IMR-90 (cell line): ENCODE measurements at regions of chr14 and their contacts with region 1.

Region 1: GRCh38 chr14:73503648-73504047 is 12.9 kb downstream of the RIOX1 start:
- DNase-seq: peak; percentile 76
- ATAC-seq: peak; percentile 72
- H3K4me3 ChIP-seq: no peak overlapping the region
- H3K27ac ChIP-seq: no peak overlapping the region
- H3K4me1 ChIP-seq: no peaks in the 10 kb centered on the region
- H3K27me3 ChIP-seq: no peaks in the 10 kb centered on the region
- CTCF ChIP-seq: no peak
- POLR2A ChIP-seq: no peak
- RAD21 ChIP-seq: no peak

Region 2: GRCh38 chr14:73162251-73162650 is 341.4 kb before region 1 on chr14:
- CTCF ChIA-PET with region 1: no interaction called
- POLR2A ChIA-PET with region 1: no interaction called
- dilution Hi-C with region 1: no loop called
- in situ Hi-C with region 1: no loop called
- intact Hi-C with region 1: no loop called
- DNase-seq: no peak
- ATAC-seq: no peak
- H3K4me3 ChIP-seq: no peak overlapping the region
- H3K27ac ChIP-seq: no peak overlapping the region
- H3K4me1 ChIP-seq: no peaks in the 10 kb centered on the region
- H3K27me3 ChIP-seq: no peaks in the 10 kb centered on the region
- CTCF ChIP-seq: no peak
- POLR2A ChIP-seq: no peak
- RAD21 ChIP-seq: no peak

Region 3: GRCh38 chr14:73477618-73478266 is 25.9 kb before region 1 on chr14:
- CTCF ChIA-PET with region 1: no interaction called
- POLR2A ChIA-PET with region 1: no interaction called
- dilution Hi-C with region 1: no loop called
- in situ Hi-C with region 1: no loop called
- intact Hi-C with region 1: no loop called
- DNase-seq: peak; percentile 76
- ATAC-seq: peak; percentile 42; the same call in 1 of the 2 replicates
- H3K4me3 ChIP-seq: no peak overlapping the region
- H3K27ac ChIP-seq: no peak overlapping the region
- H3K4me1 ChIP-seq: no peaks in the 10 kb centered on the region
- H3K27me3 ChIP-seq: no peaks in the 10 kb centered on the region
- CTCF ChIP-seq: no peak
- POLR2A ChIP-seq: no peak
- RAD21 ChIP-seq: no peak

Region 4: DNA sequence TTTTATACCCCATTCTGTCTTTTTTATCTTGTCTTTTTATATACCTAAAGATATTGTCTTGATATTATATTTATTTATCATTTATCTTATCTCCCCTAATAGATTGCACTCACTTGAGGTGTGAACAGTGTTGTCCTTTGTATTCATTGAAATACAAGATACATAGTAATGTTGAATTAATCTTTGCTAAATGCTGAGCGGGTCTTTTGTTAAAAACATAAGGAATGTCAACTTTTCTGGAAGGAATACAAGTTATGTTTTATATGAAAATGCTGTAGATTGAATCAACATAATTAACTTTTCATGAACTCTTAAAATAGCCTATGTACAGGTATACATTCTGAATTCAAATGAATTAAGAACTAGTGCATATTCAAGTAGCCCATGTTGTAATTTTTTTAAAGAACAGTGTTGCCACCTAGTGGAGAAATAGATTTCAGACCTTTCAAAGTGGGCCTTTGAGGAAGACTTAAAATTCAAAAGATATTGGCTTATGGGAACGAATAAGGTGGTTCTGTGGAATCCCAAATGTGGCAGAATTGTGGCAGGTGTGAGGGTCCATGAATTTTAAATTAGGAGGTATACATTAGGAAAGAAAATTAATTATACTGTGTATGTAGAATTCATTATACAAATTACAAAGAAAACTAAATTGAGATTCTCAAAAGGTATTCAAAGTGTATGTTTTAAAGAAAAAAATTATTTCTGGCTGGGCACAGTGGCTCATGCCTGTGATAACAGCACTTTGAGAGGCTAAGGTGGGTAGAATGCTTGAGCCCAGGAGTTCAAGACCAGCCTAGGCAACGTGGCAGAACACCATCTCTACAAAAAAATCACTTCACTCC is 534.6 kb after region 1 on chr14:
- CTCF ChIA-PET with region 1: no interaction called
- POLR2A ChIA-PET with region 1: no interaction called
- dilution Hi-C with region 1: no loop called
- in situ Hi-C with region 1: loop called (anchors 25 kb)
- intact Hi-C with region 1: no loop called
- DNase-seq: peak; percentile 64
- ATAC-seq: peak; percentile 69
- H3K4me3 ChIP-seq: no peak overlapping the region
- H3K27ac ChIP-seq: no peak overlapping the region
- H3K4me1 ChIP-seq: no peaks in the 10 kb centered on the region
- H3K27me3 ChIP-seq: no peaks in the 10 kb centered on the region
- CTCF ChIP-seq: peak; percentile 64
- POLR2A ChIP-seq: no peak
- RAD21 ChIP-seq: peak; percentile 62